ENCODE measurements at regions of chr10 and their contacts with region 1.

Region 1: GRCh38 chr10:99248824-99249223 is 13.2 kb upstream of the HPSE2 start:
- DNase-seq: no peak
- ATAC-seq: no peak
- H3K4me3 ChIP-seq: no peak overlapping the region
- H3K27ac ChIP-seq: no peak overlapping the region
- H3K4me1 ChIP-seq: no peaks in the 10 kb centered on the region
- H3K27me3 ChIP-seq: no peaks in the 10 kb centered on the region
- CTCF ChIP-seq: no peak

Region 2: GRCh38 chr10:98748298-98748697 is 500.5 kb before region 1 on chr10:
- CTCF ChIA-PET with region 1: no interaction called
- POLR2A ChIA-PET with region 1: no interaction called
- in situ Hi-C with region 1: no loop called
- intact Hi-C with region 1: loop called (anchors 2 kb)
- DNase-seq: peak; percentile 8
- ATAC-seq: no peak
- H3K4me3 ChIP-seq: no peak overlapping the region
- H3K27ac ChIP-seq: no peak overlapping the region
- H3K4me1 ChIP-seq: no peaks in the 10 kb centered on the region
- H3K27me3 ChIP-seq: no peaks in the 10 kb centered on the region
- CTCF ChIP-seq: peak; percentile 59

Region 3: DNA sequence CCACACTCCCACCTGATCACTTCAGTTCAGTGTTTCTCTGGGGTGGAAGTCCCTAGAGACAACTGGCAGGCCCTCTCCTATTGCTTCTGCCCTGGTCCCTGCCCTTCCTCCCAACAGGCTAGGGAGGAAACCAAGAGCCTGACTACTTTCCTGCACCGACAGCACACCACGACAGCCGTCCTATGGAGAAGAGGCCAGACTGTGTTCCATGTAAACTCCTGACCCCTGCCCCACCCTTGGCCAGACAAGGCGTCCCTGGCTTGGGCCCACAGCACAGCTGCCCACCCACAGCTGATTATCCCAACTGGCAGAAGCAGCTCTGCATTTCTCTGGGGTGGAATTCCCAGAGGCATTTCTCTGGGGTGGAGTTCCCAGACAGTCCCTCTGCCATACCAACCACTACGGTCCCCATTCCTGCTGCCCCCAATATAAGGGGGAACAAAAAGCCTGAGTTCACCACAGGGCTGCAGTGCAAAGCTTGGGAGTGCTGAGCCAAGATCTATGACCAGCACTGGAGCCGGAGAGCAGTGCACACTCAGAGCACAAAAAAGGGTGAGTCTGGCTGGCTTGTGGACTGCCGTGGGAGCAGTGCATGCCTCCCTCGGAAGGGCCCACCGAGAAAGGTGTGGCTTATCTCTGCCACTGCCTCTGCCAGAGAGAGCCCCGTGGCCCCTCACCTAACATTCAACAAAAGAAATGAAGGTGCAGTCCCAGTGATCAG is 206.6 kb before region 1 on chr10:
- CTCF ChIA-PET with region 1: no interaction called
- POLR2A ChIA-PET with region 1: no interaction called
- in situ Hi-C with region 1: no loop called
- intact Hi-C with region 1: loop called (anchors 10 kb)
- DNase-seq: no peak
- ATAC-seq: no peak; the same call in 1 of the 2 replicates
- H3K4me3 ChIP-seq: no peak overlapping the region
- H3K27ac ChIP-seq: no peak overlapping the region
- H3K4me1 ChIP-seq: no peaks in the 10 kb centered on the region
- H3K27me3 ChIP-seq: no peaks in the 10 kb centered on the region; the same call in none of the 2 replicates
- CTCF ChIP-seq: no peak

Region 4: DNA sequence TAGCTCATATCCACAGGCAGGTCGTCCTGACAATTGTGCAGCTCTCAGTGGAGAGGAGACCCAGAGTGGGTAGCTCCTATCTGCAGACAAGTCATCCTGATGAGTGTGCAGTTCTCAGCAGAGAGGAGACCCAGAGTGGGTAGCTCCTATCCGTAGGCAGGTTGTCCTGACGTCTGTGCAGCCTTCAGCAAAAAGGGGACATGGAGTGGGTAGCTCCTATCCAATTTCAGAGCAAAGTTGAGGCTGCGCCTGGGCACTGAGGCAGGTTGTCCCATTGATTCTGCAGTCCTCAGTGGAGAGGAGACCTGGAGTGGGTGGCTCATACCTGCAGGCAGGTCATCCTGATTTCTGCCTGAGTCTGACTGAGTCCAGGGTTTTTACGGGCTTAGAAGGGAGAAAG is 125.0 kb before region 1 on chr10:
- CTCF ChIA-PET with region 1: no interaction called
- POLR2A ChIA-PET with region 1: no interaction called
- in situ Hi-C with region 1: no loop called
- intact Hi-C with region 1: no loop called
- DNase-seq: no peak
- ATAC-seq: no peak
- H3K4me3 ChIP-seq: no peak overlapping the region
- H3K27ac ChIP-seq: no peak overlapping the region
- H3K4me1 ChIP-seq: no peaks in the 10 kb centered on the region
- H3K27me3 ChIP-seq: no peaks in the 10 kb centered on the region
- CTCF ChIP-seq: no peak

Region 5: GRCh38 chr10:99161165-99161564 is 87.7 kb before region 1 on chr10:
- CTCF ChIA-PET with region 1: no interaction called
- POLR2A ChIA-PET with region 1: no interaction called
- in situ Hi-C with region 1: no loop called
- intact Hi-C with region 1: no loop called
- DNase-seq: no peak
- ATAC-seq: no peak
- H3K4me3 ChIP-seq: no peak overlapping the region
- H3K27ac ChIP-seq: no peak overlapping the region
- H3K4me1 ChIP-seq: no peaks in the 10 kb centered on the region
- H3K27me3 ChIP-seq: no peaks in the 10 kb centered on the region
- CTCF ChIP-seq: no peak

Measured in Panc1 (cell line).